Breast epithelium (tissue), 4 donors: ENCODE measurements at regions of chr4 and their contacts with region 1.

Region 1: GRCh38 chr4:23986270-23986669 is 96.4 kb upstream of the PPARGC1A start:
- DNase-seq: no peak
- H3K4me3 ChIP-seq: no peak overlapping the region
- H3K27ac ChIP-seq: no peak overlapping the region
- H3K4me1 ChIP-seq: no peaks in the 10 kb centered on the region
- H3K27me3 ChIP-seq: no peaks in the 10 kb centered on the region
- CTCF ChIP-seq: no peak
- POLR2A ChIP-seq: no peak

Region 2: GRCh38 chr4:23966725-23967124 is 19.5 kb before region 1 on chr4:
- intact Hi-C with region 1: no loop called
- DNase-seq: no peak
- H3K4me3 ChIP-seq: no peak overlapping the region
- H3K27ac ChIP-seq: no peak overlapping the region
- H3K4me1 ChIP-seq: no peaks in the 10 kb centered on the region
- H3K27me3 ChIP-seq: no peaks in the 10 kb centered on the region
- CTCF ChIP-seq: no peak
- POLR2A ChIP-seq: no peak

Region 3: DNA sequence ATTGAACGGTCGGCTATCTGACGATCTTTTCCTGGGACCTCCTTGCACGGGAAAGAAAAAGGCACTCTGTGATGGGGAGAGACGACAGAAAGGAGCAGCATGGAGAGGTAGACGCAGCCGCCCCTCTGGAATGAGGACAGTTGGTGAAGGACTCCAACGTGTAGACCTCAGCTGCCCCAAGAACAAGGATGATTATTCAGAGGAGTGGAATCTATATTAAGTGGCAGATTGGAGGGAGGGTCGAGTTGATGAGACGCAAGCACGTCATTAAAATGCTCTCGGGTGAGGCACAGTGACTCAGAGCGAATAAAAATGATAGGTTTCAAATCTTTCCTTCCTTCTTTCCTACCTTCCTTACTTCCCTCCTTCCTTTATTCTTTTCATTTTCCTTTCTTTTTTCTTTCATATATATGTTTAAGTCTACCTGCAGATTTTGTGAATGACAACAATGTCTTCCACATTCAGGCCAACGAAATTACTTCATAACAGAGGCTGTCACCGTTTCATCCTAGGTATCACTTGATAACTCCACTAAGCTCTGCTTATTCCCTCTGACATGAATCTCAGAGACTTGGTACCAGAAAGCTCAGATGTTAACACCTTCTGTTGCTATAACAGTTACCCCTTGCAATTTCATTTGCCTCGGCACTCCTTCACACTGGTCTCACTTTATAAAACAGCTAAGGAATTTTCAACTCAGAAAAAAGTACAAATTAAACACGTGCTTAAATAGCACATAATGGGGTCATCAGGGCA is 13.6 kb after region 1 on chr4:
- intact Hi-C with region 1: loop called (anchors 1 kb)
- DNase-seq: no peak
- H3K4me3 ChIP-seq: no peak overlapping the region
- H3K27ac ChIP-seq: no peak overlapping the region
- H3K4me1 ChIP-seq: no peaks in the 10 kb centered on the region
- H3K27me3 ChIP-seq: no peaks in the 10 kb centered on the region
- CTCF ChIP-seq: no peak
- POLR2A ChIP-seq: no peak